ENCODE measurements at regions of chr17 and their contacts with region 1.

Region 1: GRCh38 chr17:28967221-28968140 is 16.2 kb upstream of the PHF12 start:
- DNase-seq: no peak
- ATAC-seq: no peak
- H3K4me3 Mint-ChIP-seq: no peak overlapping the region
- H3K27ac Mint-ChIP-seq: 0 out of 2 replicates have a peak overlapping the region, but pooled peaks have one; percentile 14
- H3K4me1 Mint-ChIP-seq: peaks cover 43% of the 10 kb centered on the region
- H3K27me3 Mint-ChIP-seq: no peaks in the 10 kb centered on the region; the same call in 1 of the 2 replicates
- CTCF ChIP-seq: no peak

Region 2: DNA sequence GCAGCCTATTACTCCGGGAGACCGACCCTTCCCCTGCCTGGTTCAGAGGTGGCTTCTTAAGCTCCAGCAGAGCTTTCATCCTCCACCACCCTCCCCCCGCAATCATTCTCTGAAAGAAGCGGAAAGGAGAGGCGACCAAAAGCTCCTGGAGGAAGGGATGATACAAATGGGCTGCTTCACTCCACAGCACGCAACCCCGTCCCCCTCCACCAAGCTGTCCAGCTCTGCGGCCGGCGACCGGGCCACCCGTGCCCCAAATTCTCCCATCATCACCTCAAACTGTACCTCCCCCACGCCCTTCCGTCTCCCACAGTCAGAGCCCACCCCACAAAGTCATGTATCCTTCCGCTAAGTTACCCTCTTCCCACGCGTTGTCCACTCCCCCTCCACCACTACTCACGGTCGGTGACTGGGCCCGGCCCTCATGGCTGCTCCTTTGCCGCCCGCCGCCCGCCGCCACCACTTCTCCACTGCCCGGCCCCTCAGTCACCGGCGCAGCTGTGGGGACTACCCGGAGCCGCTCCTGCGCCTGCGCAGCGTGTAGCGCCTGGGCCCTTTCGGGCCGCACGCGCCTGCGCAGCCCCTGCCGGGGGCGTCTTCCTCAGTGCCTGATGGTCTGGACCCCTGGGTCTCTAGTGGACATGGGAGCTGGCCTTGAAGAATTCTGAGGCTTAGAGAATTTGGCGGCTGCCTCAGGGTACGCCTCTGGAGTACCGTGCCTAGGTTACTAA is 125.0 kb before region 1 on chr17 and contains the start of gene FAM222B:
- CTCF ChIA-PET with region 1: no interaction called
- POLR2A ChIA-PET with region 1: no interaction called
- DNase-seq: peak; percentile 89
- ATAC-seq: peak; percentile 99
- H3K4me3 Mint-ChIP-seq: peak within 1 kb of the TSS; percentile 96
- H3K27ac Mint-ChIP-seq: peak within 1 kb of the TSS; percentile 95
- H3K4me1 Mint-ChIP-seq: peaks cover 15% of the 10 kb centered on the region
- H3K27me3 Mint-ChIP-seq: no peaks in the 10 kb centered on the region
- CTCF ChIP-seq: no peak
- total RNA-seq, gene FAM222B: 86.6 to 94.6 TPM (median 91.5 TPM) in 3 replicates

Region 3: GRCh38 chr17:28887871-28888471 is 79.5 kb before region 1 on chr17:
- CTCF ChIA-PET with region 1: no interaction called
- POLR2A ChIA-PET with region 1: no interaction called
- DNase-seq: no peak
- ATAC-seq: no peak
- H3K4me3 Mint-ChIP-seq: no peak overlapping the region
- H3K27ac Mint-ChIP-seq: no peak overlapping the region
- H3K4me1 Mint-ChIP-seq: peaks cover 7% of the 10 kb centered on the region
- H3K27me3 Mint-ChIP-seq: no peaks in the 10 kb centered on the region
- CTCF ChIP-seq: no peak

Region 4: DNA sequence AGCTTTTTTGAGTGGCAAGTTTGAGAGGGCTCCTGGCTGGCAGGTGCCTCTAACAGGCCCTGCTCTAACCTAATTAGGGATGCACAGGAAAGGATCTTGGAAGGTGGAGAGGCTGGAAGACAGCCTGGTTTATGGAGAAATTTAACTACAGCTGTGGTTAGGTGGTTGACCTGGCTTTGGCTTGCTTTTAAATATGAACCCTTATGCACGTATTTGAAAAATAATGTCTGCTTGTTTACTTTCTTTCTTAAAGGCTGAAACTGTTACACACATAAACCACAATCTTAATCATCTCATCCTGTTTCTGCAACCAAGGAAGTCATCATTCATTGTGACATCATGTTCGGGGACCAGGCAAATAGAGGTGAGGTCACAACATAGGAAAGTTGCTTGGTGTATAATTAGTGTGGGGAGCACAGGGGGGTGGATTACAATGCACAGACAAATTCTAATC is 41.5 kb before region 1 on chr17:
- CTCF ChIA-PET with region 1: no interaction called
- POLR2A ChIA-PET with region 1: no interaction called
- DNase-seq: no peak
- ATAC-seq: no peak
- H3K4me3 Mint-ChIP-seq: no peak overlapping the region
- H3K27ac Mint-ChIP-seq: peak overlapping the region; percentile 67
- H3K4me1 Mint-ChIP-seq: 0 out of 2 replicates have a peak, but pooled peaks cover 4% of the 10 kb centered on the region
- H3K27me3 Mint-ChIP-seq: no peaks in the 10 kb centered on the region
- CTCF ChIP-seq: no peak

Region 5: GRCh38 chr17:28982131-28982951 is 14.9 kb after region 1 on chr17:
- CTCF ChIA-PET with region 1: interaction called, 15 read pairs
- POLR2A ChIA-PET with region 1: no interaction called
- DNase-seq: no peak
- ATAC-seq: no peak
- H3K4me3 Mint-ChIP-seq: no peak overlapping the region
- H3K27ac Mint-ChIP-seq: no peak overlapping the region
- H3K4me1 Mint-ChIP-seq: peaks cover 36% of the 10 kb centered on the region
- H3K27me3 Mint-ChIP-seq: peaks cover 54% of the 10 kb centered on the region
- CTCF ChIP-seq: no peak

Region 6: DNA sequence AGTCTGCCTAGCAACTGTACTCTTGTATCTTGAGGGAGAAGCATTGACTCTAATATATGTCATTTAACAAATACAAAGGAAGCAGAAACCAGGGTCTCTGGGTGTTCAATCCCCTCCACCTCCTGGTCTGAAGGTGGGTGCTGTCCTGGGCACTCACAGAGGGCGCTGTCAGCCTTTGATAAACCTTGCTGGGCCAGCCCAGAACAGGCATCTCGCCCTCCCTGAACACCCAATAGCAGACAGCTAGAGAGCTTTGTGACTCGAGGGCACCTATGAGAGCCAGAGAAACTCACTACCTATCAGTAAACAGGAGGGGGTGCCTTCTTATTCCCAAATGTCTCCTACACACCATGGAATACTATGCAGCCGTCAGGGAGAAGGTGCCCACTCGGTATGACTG is 69.1 kb after region 1 on chr17:
- CTCF ChIA-PET with region 1: interaction called, 13 read pairs
- POLR2A ChIA-PET with region 1: no interaction called
- DNase-seq: no peak
- ATAC-seq: 0 out of 2 replicates have a peak, but pooled peaks have one; percentile 6
- H3K4me3 Mint-ChIP-seq: no peak overlapping the region
- H3K27ac Mint-ChIP-seq: peak overlapping the region; percentile 64; the same call in 1 of the 2 replicates
- H3K4me1 Mint-ChIP-seq: peaks cover 38% of the 10 kb centered on the region
- H3K27me3 Mint-ChIP-seq: peaks cover 20% of the 10 kb centered on the region
- CTCF ChIP-seq: no peak

Region 7: DNA sequence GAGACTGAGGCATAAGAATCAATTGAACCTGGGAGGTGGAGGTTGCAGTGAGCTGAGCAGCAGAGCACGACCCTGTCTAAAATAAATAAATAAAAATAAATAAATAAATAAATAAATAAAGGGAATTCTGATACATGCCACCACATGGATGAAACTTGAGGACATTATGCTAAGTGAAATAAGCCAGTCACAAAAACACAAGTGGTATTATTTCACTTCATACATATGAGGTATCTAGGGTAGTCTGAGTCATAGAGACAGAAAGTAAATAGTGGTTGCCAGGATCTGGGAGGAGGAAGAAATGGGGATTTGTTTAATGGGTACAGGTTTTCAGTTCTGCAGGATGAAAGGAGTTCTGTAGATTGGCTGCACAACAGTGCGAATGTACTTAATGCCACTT is 91.8 kb after region 1 on chr17:
- CTCF ChIA-PET with region 1: interaction called, 12 read pairs
- POLR2A ChIA-PET with region 1: no interaction called
- DNase-seq: no peak
- ATAC-seq: no peak
- H3K4me3 Mint-ChIP-seq: no peak overlapping the region
- H3K27ac Mint-ChIP-seq: no peak overlapping the region
- H3K4me1 Mint-ChIP-seq: peaks cover 43% of the 10 kb centered on the region
- H3K27me3 Mint-ChIP-seq: no peaks in the 10 kb centered on the region
- CTCF ChIP-seq: no peak

Region 8: GRCh38 chr17:29084541-29085146 is 117.2 kb after region 1 on chr17:
- CTCF ChIA-PET with region 1: interaction called, 78 read pairs
- POLR2A ChIA-PET with region 1: interaction called, 3 read pairs
- DNase-seq: no peak
- ATAC-seq: peak; percentile 19
- H3K4me3 Mint-ChIP-seq: no peak overlapping the region
- H3K27ac Mint-ChIP-seq: peak overlapping the region; percentile 5; the same call in 1 of the 2 replicates
- H3K4me1 Mint-ChIP-seq: peaks cover 43% of the 10 kb centered on the region
- H3K27me3 Mint-ChIP-seq: no peaks in the 10 kb centered on the region
- CTCF ChIP-seq: no peak

Region 9: DNA sequence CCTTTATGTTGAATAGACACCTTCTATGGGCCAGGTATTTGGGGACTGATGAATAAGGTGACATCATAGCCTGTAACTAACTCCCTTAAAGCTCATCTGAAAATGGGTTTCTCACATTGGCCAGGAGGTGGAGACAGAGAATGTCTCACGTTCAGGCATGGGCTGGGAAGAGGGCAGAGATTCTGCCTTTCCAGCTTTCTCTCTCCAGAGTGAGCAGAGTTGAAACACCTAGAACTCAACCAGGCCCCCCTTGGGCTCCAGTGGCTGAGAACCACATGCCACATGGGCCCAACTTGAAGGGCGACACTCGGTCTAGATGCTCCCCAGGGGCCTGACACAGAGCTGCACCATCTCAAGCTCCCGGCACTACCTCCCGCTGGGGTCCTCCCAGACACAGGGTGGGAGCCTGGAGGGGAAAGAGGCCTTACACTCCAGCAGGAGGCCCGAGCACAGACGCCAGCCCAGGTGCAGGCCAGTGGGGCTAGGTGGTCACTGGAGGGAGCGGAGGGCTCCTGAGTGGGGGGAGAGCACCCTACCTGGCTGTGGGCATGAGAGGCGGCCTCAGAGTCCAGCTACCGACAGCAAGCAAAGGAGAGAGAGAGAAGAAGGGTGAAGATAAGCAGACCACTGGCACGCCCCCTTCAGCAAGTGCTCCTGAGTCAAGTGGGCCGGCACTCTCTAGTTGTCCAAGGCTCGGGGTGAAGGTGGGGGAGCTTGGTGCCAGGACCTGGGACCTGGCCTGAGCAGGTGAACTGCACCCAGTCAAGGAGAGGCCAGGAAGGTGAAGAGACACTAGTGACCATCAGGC is 156.8 kb after region 1 on chr17:
- CTCF ChIA-PET with region 1: interaction called, 762 read pairs
- POLR2A ChIA-PET with region 1: no interaction called
- DNase-seq: peak; percentile 51
- ATAC-seq: peak; percentile 87
- H3K4me3 Mint-ChIP-seq: no peak overlapping the region
- H3K27ac Mint-ChIP-seq: no peak overlapping the region
- H3K4me1 Mint-ChIP-seq: peaks cover 3% of the 10 kb centered on the region; the same call in 1 of the 2 replicates
- H3K27me3 Mint-ChIP-seq: no peaks in the 10 kb centered on the region
- CTCF ChIP-seq: no peak

Region 10: DNA sequence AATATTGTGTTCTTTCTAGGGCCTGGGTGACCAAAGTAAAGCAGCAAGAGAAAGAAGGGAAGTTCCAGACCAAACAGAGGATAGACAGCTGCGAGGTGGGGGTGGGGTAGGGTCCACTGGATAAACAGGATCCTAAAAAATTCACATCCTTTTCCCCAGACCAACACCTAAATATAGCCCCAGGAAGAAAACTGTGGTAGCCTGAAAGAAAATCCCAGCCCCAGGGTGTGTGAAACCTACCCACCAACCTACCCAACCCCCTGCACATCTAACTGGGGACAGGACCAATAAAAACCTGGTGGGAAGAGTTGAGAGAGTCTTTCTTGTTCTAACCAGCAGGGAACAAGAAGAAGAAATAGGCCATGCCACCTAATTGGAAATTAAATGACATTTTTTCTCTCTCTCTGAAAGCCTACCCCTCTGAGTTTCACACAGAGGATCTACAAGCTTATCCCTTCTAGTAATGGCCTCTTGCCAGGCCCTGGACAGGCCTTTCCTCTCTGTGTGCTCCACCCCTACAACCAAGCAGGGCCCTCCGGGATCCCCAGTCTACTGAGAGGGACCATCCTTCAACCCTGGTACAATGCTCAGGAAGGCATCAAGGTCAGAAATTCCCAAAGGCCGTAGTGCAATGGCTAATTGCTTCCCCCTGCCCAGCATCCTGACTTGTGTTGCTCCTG is 200.7 kb after region 1 on chr17:
- CTCF ChIA-PET with region 1: no interaction called
- POLR2A ChIA-PET with region 1: no interaction called
- DNase-seq: no peak
- ATAC-seq: no peak
- H3K4me3 Mint-ChIP-seq: no peak overlapping the region
- H3K27ac Mint-ChIP-seq: peak overlapping the region; percentile 84
- H3K4me1 Mint-ChIP-seq: peaks cover 12% of the 10 kb centered on the region
- H3K27me3 Mint-ChIP-seq: no peaks in the 10 kb centered on the region
- CTCF ChIP-seq: no peak

Measured in WTC11 (cell line).